ENCODE measurements at regions of chr15 and their contacts with region 1.

Region 1: GRCh38 chr15:66472176-66472999 is 25.2 kb downstream of the SNAPC5 start:
- DNase-seq: no peak
- H3K4me3 ChIP-seq: no peak overlapping the region
- H3K27me3 ChIP-seq: no peaks in the 10 kb centered on the region
- CTCF ChIP-seq: no peak

Region 2: DNA sequence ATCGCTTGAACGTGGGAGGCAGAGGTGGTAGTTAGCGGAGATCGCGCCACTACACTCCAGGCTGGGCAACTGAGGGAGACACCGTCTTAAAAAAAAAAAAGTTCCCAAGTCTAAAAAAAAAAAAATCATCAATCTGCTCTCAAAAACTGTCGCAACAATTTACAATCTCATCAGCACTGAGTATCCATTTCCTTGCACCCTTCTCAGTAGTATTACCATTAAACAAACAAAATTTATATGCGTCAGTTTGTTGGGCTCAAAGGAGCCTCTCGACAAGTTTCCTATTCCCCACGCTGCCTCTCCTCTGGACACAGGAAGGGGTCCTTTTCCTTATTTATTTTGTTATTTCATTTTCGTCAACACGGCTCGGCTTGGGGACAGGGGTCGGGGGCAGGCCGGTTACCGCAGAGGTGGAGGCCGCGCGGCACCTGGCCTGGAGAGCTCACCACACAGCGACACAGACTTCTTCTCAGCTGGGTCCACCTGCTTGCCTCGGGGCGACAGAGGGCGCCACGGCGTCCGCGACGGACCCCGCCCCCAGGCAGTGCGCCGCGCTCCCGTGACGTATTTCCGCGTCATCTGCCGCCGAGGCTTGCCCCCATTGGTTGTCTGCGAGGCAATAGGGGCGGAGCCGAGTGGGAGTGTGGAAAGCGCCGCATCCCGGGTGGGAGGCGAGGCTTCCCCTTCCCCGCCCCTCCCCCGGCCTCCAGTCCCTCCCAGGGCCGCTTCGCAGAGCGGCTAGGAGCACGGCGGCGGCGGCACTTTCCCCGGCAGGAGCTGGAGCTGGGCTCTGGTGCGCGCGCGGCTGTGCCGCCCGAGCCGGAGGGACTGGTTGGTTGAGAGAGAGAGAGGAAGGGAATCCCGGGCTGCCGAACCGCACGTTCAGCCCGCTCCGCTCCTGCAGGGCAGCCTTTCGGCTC is 85.9 kb before region 1 on chr15 and contains the start of gene MAP2K1:
- CTCF ChIA-PET with region 1: interaction called, 3 read pairs
- POLR2A ChIA-PET with region 1: interaction called, 14 read pairs
- DNase-seq: peak; percentile 75
- H3K4me3 ChIP-seq: peak within 1 kb of the TSS; percentile 86
- H3K27me3 ChIP-seq: no peaks in the 10 kb centered on the region
- CTCF ChIP-seq: peak; percentile 88
- polyA plus RNA-seq, gene MAP2K1: 19.0 and 21.8 TPM in 2 replicates

Region 3: DNA sequence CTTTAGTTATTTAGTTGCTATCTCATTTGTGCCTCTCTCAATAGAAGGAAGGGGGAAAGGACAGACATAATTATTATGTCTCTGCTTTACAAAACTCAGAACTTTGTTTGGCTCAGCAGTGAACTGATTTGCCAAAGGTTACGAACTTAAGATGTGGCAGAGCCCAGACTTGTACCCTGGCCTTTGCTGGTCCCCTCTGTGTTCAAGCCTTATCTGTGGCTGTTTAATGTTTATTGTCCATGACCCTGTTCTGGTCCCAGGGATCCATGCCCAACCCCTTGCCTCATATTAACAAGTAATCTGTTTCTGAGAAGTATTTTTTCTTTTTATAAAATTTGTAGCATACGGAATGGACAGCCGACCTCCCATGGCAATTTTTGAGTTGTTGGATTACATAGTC is 14.5 kb after region 1 on chr15:
- CTCF ChIA-PET with region 1: no interaction called
- POLR2A ChIA-PET with region 1: no interaction called
- DNase-seq: no peak
- H3K4me3 ChIP-seq: no peak overlapping the region
- H3K27me3 ChIP-seq: no peaks in the 10 kb centered on the region
- CTCF ChIP-seq: no peak

Measured in BJ (cell line).